PC-9 (cell line): ENCODE measurements at regions of chr13 and their contacts with region 1.

Region 1: GRCh38 chr13:59483501-59484145 is 680.1 kb downstream of the DIAPH3 start:
- DNase-seq: no peak
- H3K4me3 ChIP-seq: no peak overlapping the region
- H3K27ac ChIP-seq: no peak overlapping the region
- H3K4me1 ChIP-seq: no peaks in the 10 kb centered on the region
- H3K27me3 ChIP-seq: no peaks in the 10 kb centered on the region
- CTCF ChIP-seq: no peak

Region 2: DNA sequence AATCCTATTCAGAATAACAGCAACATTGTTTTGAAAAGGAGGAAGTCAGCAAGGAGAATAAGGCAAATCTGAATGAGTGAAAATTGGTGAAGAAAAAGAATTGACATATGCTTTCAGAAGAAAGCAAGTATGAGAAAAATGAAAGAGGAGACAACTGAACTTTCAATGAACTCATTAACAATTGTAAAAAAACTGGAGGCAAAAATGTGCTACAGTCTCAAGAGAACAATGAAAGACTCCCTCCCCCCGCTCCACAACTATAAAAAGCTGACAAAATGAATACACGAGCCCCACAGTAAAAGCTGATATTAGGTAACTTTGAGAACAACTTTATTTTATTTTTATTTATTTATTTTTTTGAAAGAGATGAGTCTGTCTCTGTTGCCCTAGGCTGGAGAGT is 307.0 kb after region 1 on chr13:
- CTCF ChIA-PET with region 1: interaction called, 11 read pairs
- POLR2A ChIA-PET with region 1: no interaction called
- intact Hi-C with region 1: no loop called
- DNase-seq: no peak
- H3K4me3 ChIP-seq: no peak overlapping the region
- H3K27ac ChIP-seq: no peak overlapping the region
- H3K4me1 ChIP-seq: no peaks in the 10 kb centered on the region
- H3K27me3 ChIP-seq: no peaks in the 10 kb centered on the region
- CTCF ChIP-seq: no peak